Mammary epithelial cell (primary cell): ENCODE measurements at regions of chr7 and their contacts with region 1.

Region 1: DNA sequence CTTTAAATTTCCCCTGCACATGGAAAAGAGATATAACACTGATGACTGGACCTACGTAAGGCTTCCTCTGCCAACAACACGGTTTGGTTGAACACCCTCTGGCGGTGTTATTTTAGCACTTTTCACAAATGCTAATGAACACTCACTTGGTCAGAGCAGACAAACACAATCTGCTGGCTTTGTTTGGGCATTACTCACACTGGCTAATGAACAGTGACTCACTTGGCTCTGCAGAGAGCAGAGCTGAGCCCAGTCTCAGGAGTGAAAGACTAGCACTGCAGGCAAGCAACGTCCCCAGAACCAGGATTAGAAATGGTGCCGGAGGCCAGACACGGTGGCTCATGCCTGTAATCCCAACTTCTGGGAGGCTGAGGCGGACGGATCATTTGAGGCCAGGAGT is 430.8 kb downstream of the PLXNA4 start:
- DNase-seq: peak; percentile 92
- H3K4me3 ChIP-seq: no peak overlapping the region
- H3K27ac ChIP-seq: no peak overlapping the region
- H3K4me1 ChIP-seq: peaks cover 12% of the 10 kb centered on the region
- H3K27me3 ChIP-seq: no peaks in the 10 kb centered on the region
- CTCF ChIP-seq: peak; percentile 27 to 53

Region 2: DNA sequence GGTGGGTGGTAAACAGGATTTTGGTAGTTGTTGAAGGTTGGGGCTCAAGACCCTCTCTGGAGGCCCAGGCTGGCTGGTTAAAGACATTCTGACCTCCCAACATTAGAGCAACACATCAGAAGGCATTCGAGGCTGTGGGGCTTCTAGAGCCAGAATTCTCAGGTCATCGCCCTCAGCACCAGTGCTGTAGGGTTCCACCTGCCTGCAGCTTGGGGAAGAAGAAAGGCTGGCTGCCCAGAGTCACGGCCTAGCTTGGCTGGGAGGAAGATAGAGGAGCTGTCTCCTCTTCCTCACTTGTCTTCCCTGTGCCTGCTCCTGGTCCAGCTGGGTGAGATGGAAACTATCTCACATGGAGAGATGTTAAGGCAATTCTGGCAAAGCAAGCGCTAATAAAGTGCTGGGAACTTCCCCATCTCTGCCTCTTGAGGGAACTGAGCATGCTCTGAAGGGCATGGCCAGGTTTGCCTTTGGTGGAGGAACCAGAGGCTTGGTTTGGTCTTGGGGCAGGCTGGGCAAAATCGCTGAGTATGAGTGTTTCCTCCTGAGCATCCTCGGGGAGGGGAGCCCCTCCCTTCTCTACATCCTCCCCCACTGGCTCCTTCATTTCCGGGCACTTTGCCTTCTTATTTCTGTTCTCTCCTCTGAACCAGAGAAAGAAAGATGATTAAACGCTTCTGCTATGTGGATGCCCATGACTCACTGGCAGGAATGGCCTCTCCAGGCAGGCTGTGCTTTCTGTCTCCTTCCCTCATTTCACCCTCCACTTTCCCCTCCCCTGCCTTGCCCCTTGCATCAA is 80.1 kb before region 1 on chr7:
- CTCF ChIA-PET with region 1: interaction called, 3 read pairs
- dilution Hi-C with region 1: no loop called
- in situ Hi-C with region 1: no loop called
- intact Hi-C with region 1: loop called (anchors 2 kb)
- DNase-seq: peak; percentile 91
- H3K4me3 ChIP-seq: no peak overlapping the region
- H3K27ac ChIP-seq: peak overlapping the region; percentile 26
- H3K4me1 ChIP-seq: peaks cover 17% of the 10 kb centered on the region
- H3K27me3 ChIP-seq: no peaks in the 10 kb centered on the region
- CTCF ChIP-seq: no peak

Region 3: DNA sequence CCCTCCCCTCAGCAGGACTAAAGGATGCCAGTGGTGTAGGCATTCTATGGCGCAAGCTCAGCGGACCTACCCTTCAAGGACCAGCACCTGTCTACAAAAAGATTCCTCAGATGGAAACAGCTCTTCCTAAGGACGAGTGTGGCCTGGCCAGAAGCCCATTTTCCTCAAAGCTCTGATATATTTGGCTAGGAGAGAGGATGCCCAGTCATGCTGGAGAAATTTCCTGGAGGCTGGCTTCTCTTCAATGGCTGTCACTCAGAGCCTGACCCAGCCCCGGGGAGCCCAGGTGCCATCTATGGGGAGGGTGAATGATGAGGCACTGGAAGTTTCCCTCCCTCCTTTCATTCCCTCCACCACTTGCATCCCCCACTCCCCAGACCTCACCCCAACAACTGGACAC is 319.3 kb after region 1 on chr7:
- CTCF ChIA-PET with region 1: no interaction called
- dilution Hi-C with region 1: no loop called
- in situ Hi-C with region 1: no loop called
- intact Hi-C with region 1: no loop called
- DNase-seq: peak; percentile 14
- H3K4me3 ChIP-seq: no peak overlapping the region
- H3K27ac ChIP-seq: no peak overlapping the region
- H3K4me1 ChIP-seq: no peaks in the 10 kb centered on the region
- H3K27me3 ChIP-seq: no peaks in the 10 kb centered on the region
- CTCF ChIP-seq: no peak